ENCODE measurements at regions of chr16 and their contacts with region 1.

Region 1: DNA sequence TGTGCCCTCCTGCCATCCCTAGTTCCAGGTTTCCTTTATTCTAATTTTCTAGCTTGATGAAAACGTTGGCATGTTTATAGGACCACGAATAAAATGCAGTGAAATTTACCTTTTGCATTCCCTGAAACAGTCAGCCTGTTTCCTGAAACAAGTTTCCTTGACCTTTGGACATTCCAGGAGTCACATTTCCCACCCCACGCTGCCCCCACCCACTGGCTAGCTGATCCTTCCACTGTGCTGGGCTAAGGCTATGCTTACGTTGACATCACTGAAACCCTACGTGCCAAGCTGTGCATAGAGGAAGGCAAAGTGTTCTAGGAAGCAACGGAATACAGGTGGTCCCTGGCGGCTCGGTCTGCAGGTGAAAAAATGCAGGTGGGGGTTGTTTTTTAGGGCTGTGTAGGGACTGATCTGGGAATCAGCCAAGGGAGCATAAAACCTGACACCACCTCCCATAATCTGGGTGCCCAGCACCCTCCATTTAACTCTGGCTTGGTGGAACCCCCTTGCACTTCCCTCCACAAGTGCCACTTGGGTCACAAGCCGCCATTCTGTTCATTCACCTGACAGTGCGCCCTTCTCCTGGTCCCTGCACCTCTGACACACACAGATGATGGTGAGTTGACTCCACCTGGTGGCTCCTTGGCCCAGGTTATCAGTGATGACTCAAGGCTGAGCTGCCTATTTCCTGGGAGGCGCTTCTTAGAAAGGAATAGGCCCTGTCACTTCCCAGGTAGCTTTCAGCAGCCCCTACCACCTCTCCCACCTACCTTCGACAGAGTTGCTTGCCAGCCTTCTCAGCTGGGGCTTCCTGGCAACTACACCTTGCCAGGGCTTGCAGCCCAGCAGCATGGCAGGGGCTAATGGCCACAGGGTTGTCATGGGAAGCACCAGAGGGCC is 83.7 kb downstream of the N4BP1 start:
- DNase-seq: peak; percentile 40
- ATAC-seq: peak; percentile 94
- H3K4me3 ChIP-seq: no peak overlapping the region
- H3K27ac ChIP-seq: no peak overlapping the region
- H3K4me1 ChIP-seq: 0 out of 2 replicates have a peak, but pooled peaks cover 5% of the 10 kb centered on the region
- H3K27me3 ChIP-seq: no peaks in the 10 kb centered on the region
- CTCF ChIP-seq: peak; percentile 53 to 75 (median 54); a peak in 4 of 6 replicates
- EP300 ChIP-seq: no peak
- POLR2A ChIP-seq: no peak
- RAD21 ChIP-seq: peak; percentile 90

Region 2: DNA sequence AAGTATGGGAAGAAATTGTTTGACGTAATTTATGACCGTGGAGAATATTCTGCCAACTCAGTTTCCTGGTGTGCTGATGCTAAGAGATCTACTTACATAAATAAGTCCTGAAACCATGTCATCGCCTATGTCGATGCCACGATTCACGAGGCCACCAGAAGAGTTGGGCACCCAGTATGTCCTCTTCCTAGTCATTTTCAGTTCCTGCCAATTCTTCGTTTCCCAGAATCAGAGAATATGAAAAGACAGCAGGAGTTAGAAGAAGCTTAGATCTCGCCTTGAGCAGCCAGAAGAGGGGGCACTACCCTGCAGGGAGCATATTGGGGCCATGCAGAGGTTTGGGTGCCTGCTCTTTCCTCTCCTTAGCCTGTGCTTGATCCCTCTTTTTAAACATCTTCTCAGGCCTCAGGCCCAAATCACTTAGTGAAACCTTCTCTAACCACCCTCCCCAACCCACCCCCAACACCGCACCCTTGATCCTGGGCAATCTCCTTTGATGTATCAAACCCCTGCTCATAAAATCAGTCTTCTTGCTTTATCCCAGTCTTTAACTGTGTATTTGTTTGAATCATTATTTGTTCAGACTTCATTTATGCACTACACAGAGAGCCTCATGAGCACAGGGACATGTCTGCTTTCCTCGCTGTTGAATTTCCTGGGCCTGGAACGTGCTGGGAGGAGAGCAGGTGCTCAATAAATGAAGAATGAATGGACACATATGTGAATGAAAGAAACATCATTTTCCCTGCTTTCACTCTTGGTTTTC is 294.4 kb before region 1 on chr16:
- CTCF ChIA-PET with region 1: interaction called, 42 read pairs
- POLR2A ChIA-PET with region 1: no interaction called
- RAD21 ChIA-PET with region 1: interaction called, 5 read pairs
- SMC1A ChIA-PET with region 1: interaction called, 8 read pairs
- in situ Hi-C with region 1: no loop called
- intact Hi-C with region 1: no loop called
- DNase-seq: no peak
- ATAC-seq: peak; percentile 93
- H3K4me3 ChIP-seq: no peak overlapping the region
- H3K27ac ChIP-seq: no peak overlapping the region
- H3K4me1 ChIP-seq: peaks cover 3% of the 10 kb centered on the region
- H3K27me3 ChIP-seq: no peaks in the 10 kb centered on the region
- CTCF ChIP-seq: peak; percentile 61 to 62 (median 62); a peak in 5 of 6 replicates
- EP300 ChIP-seq: no peak
- POLR2A ChIP-seq: no peak
- RAD21 ChIP-seq: peak; percentile 75

Region 3: DNA sequence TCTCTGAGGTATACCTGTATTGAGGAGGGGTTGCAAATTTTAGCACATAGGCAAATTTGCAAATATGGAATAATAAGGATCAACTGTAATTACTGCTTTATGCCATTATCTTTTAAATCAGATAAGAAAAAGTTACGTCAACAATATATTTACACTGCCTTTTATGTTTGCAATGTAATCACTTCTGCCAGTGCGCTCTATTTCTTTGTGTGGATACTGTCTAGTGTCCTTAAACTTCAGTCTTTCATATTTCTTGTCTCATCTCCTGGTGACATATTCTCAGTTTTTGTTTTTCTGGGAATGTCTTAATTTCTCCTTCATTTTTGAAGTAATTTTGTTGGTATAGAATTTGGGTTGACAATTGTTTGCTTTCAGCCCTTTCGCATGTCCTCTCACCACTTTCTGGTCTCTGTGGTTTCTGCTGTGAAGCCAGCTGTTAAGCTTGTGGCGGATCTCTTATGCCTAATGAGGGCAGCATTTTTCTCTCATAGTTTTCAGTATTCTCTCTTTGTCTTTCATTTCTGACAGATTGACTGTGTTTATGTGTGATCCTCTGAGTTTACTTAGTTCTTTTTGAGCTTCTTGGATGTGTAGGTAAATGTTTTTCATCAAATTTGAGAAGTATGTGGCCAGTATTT is 241.4 kb before region 1 on chr16:
- CTCF ChIA-PET with region 1: interaction called, 5 read pairs
- POLR2A ChIA-PET with region 1: no interaction called
- RAD21 ChIA-PET with region 1: interaction called, 3 read pairs
- SMC1A ChIA-PET with region 1: no interaction called
- in situ Hi-C with region 1: no loop called
- intact Hi-C with region 1: loop called (anchors 5 kb)
- DNase-seq: peak; percentile 25
- ATAC-seq: peak; percentile 87
- H3K4me3 ChIP-seq: no peak overlapping the region
- H3K27ac ChIP-seq: no peak overlapping the region
- H3K4me1 ChIP-seq: no peaks in the 10 kb centered on the region
- H3K27me3 ChIP-seq: no peaks in the 10 kb centered on the region
- CTCF ChIP-seq: peak in 1 of 3 experiments; percentile 8; a peak in 1 of 6 replicates
- EP300 ChIP-seq: no peak
- POLR2A ChIP-seq: no peak
- RAD21 ChIP-seq: no peak

Region 4: DNA sequence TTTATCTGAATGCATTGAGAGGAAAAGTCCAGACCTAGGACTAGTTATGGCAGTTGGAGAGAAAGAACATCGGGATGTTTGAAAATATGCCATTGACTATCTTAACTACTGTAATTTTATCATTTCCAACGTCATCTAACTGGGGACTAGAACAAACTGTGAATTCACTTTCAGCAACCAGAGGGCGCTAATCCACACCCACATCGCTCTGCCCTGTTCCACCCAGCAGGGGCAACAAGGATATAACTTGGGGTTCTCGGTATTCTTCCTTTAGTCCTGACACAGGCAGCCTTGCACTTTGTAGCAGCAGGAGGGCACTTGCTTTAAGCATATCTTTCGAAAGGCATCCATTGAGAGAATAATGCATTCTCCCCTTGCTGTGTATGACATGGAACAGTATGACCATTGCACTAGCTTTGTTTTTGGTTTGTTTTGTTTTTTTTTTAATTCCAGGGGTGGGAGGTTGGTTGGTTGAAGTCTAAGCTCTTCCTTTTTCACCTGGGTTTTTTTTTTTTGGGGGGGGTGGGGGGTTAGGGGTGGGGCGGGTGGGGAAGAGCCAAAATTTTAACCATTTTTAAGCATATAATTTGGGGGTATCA is 172.6 kb before region 1 on chr16:
- CTCF ChIA-PET with region 1: interaction called, 69 read pairs
- POLR2A ChIA-PET with region 1: interaction called, 8 read pairs
- RAD21 ChIA-PET with region 1: interaction called, 66 read pairs
- SMC1A ChIA-PET with region 1: interaction called, 89 read pairs
- in situ Hi-C with region 1: loop called (anchors 5 kb)
- intact Hi-C with region 1: loop called (anchors 1 kb)
- DNase-seq: peak; percentile 37
- ATAC-seq: peak; percentile 94
- H3K4me3 ChIP-seq: no peak overlapping the region
- H3K27ac ChIP-seq: no peak overlapping the region
- H3K4me1 ChIP-seq: peaks cover 5% of the 10 kb centered on the region
- H3K27me3 ChIP-seq: no peaks in the 10 kb centered on the region
- CTCF ChIP-seq: peak; percentile 86 to 93 (median 91)
- EP300 ChIP-seq: no peak
- POLR2A ChIP-seq: no peak
- RAD21 ChIP-seq: peak; percentile 88

Measured in GM12878 (cell line).